Natural killer cell (primary cell): ENCODE measurements at regions of chr16 and their contacts with region 1.

Region 1: GRCh38 chr16:8567750-8568617 is 22.3 kb downstream of the TMEM114 start:
- DNase-seq: peak; percentile 65 to 89
- ATAC-seq: peak; percentile 92 to 95 (median 95)
- H3K4me3 ChIP-seq: no peak overlapping the region
- H3K4me3 Mint-ChIP-seq: no peak overlapping the region
- H3K27ac ChIP-seq: no peak overlapping the region
- H3K27ac Mint-ChIP-seq: no peak overlapping the region
- H3K4me1 ChIP-seq: peaks cover 6% of the 10 kb centered on the region
- H3K4me1 Mint-ChIP-seq: no peaks in the 10 kb centered on the region
- H3K27me3 ChIP-seq: no peaks in the 10 kb centered on the region
- H3K27me3 Mint-ChIP-seq: peaks cover 0 to 8% of the 10 kb centered on the region in 2 donors
- CTCF ChIP-seq: peak; percentile 96

Region 2: DNA sequence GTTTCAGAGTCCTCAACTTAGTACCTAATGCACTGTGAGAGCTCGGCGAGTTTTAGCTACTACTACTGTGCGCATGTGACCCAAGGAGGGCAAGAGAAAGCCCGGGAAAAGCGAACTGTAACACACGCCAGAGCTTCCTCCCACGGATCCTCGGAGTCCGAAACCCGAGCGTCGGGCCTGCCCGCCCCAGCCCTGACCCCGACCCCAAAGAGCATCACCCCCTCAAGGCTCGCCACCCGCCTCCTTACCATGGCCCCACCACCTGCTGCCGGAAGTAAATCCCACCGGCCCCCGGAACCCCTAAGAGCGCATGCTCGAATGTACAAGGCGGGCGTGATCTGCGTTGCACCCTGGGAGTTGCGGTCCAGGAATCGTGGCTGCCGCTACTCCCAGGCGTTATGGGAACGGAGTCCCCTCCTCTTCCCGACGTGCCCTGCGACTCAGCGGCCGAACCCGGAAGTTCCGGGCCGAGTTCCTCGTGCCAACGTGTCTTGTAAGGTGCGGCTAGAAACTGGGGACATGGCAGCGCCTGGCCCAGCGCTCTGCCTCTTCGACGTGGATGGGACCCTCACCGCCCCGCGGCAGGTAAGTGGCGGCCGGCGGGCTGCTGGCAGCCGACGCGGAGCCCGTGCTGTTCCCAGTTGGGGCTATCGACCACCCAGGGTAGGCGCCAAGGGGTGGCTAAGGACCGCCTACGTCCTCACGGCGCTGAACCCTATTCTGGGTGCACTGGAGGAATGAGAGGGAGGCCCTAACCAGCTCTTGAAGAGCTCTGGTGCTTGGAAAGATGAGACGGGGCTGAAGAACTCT is 229.6 kb after region 1 on chr16 and contains the starts of genes PMM2 and TMEM186:
- intact Hi-C with region 1: loop called (anchors 10 kb)
- DNase-seq: peak; percentile 89 to 98
- ATAC-seq: peak; percentile 95 to 98 (median 97)
- H3K4me3 ChIP-seq: peak within 1 kb of the TSS; percentile 77
- H3K4me3 Mint-ChIP-seq: peak within 1 kb of the TSS; percentile 88
- H3K27ac ChIP-seq: peak within 1 kb of the TSS; percentile 66
- H3K27ac Mint-ChIP-seq: peak within 1 kb of the TSS; percentile 88 to 96
- H3K4me1 ChIP-seq: peaks cover 20% of the 10 kb centered on the region
- H3K4me1 Mint-ChIP-seq: peaks cover 30 to 35% of the 10 kb centered on the region in 2 donors
- H3K27me3 ChIP-seq: no peaks in the 10 kb centered on the region
- H3K27me3 Mint-ChIP-seq: no peaks in the 10 kb centered on the region
- CTCF ChIP-seq: no peak
- total RNA-seq, gene PMM2: 33.4 to 37.6 (median 36.4) TPM
- total RNA-seq, gene TMEM186: 3.0 to 5.2 (median 4.1) TPM

Region 3: GRCh38 chr16:8880839-8881510 is 313.0 kb after region 1 on chr16:
- intact Hi-C with region 1: loop called (anchors 1 kb)
- DNase-seq: no peak
- ATAC-seq: no peak
- H3K4me3 ChIP-seq: no peak overlapping the region
- H3K4me3 Mint-ChIP-seq: no peak overlapping the region
- H3K27ac ChIP-seq: no peak overlapping the region
- H3K27ac Mint-ChIP-seq: no peak overlapping the region
- H3K4me1 ChIP-seq: peaks cover 16% of the 10 kb centered on the region
- H3K4me1 Mint-ChIP-seq: peaks cover 10 to 15% of the 10 kb centered on the region in 2 donors
- H3K27me3 ChIP-seq: no peaks in the 10 kb centered on the region
- H3K27me3 Mint-ChIP-seq: peaks cover 0 to 8% of the 10 kb centered on the region in 2 donors
- CTCF ChIP-seq: no peak

Region 4: GRCh38 chr16:9008601-9009260 is 440.7 kb after region 1 on chr16:
- intact Hi-C with region 1: loop called (anchors 1 kb)
- DNase-seq: peak; percentile 53 to 77
- ATAC-seq: peak; percentile 83 to 99 (median 98)
- H3K4me3 ChIP-seq: no peak overlapping the region
- H3K4me3 Mint-ChIP-seq: no peak overlapping the region
- H3K27ac ChIP-seq: no peak overlapping the region
- H3K27ac Mint-ChIP-seq: no peak overlapping the region
- H3K4me1 ChIP-seq: peaks cover 8% of the 10 kb centered on the region
- H3K4me1 Mint-ChIP-seq: peaks cover 0 to 7% of the 10 kb centered on the region in 2 donors
- H3K27me3 ChIP-seq: no peaks in the 10 kb centered on the region
- H3K27me3 Mint-ChIP-seq: peaks cover 0 to 12% of the 10 kb centered on the region in 2 donors
- CTCF ChIP-seq: peak; percentile 79

Region 5: GRCh38 chr16:9134739-9135138 is 566.8 kb after region 1 on chr16:
- intact Hi-C with region 1: loop called (anchors 10 kb)
- DNase-seq: peak; percentile 53 to 76
- ATAC-seq: peak; percentile 67 to 78 (median 74)
- H3K4me3 ChIP-seq: no peak overlapping the region
- H3K4me3 Mint-ChIP-seq: peak overlapping the region; percentile 65
- H3K27ac ChIP-seq: no peak overlapping the region
- H3K27ac Mint-ChIP-seq: peak overlapping the region in 1 of 2 donors; percentile 58
- H3K4me1 ChIP-seq: peaks cover 43% of the 10 kb centered on the region
- H3K4me1 Mint-ChIP-seq: peaks cover 30 to 51% of the 10 kb centered on the region in 2 donors
- H3K27me3 ChIP-seq: no peaks in the 10 kb centered on the region
- H3K27me3 Mint-ChIP-seq: peaks cover 0 to 2% of the 10 kb centered on the region in 2 donors
- CTCF ChIP-seq: peak; percentile 58

Region 6: DNA sequence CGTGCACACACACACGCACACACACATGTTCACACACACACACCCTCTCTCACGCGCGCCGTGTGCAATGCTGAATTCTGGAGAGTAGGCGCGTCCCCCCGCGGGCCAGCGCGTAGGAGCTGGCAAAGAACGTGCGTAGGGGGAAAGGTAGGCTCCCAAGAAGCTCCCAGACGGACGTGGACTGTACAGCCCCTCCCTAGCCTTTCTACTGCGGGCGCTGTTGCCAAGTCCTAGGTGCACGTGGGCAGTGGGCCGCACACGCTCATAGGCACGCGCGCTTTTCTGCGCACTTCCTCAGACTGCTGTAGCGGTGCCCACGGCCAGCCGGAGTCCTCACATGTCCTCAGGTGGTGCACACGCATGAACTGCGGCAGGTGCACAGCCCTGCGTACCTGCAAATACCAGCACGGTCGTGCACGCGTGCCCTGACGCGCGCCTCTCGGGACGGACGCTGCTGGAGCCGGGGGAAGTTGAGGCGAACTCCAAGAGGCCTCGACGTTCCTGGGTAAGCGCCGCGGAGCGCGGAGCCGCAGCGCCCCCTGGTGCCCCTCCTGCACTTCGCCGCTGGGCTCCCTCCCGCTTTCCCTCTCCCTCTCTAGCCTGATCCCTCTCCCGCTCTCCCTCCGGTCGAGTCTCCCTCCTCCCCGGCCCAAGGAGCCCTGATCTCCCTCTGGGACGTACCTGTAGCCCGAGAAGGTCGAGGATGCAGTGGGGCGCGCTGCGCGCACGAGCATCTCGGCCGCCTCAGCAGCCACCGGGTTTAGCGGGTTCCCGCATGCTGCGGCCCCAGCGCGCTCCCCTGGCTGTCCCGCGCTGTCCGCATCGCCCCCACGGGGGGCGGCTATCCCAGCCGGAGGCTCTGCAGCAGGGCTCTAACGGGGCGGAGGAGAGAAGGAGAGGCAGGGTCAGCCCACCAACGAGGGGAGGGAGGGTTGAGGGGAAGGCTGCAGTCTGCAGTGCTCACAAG is 1613.5 kb after region 1 on chr16:
- intact Hi-C with region 1: loop called (anchors 5 kb)
- DNase-seq: peak in 1 of 2 donors; percentile 38
- ATAC-seq: peak in 1 of 3 donors; percentile 62
- H3K4me3 ChIP-seq: no peak overlapping the region
- H3K4me3 Mint-ChIP-seq: no peak overlapping the region
- H3K27ac ChIP-seq: no peak overlapping the region
- H3K27ac Mint-ChIP-seq: no peak overlapping the region
- H3K4me1 ChIP-seq: peaks cover 14% of the 10 kb centered on the region
- H3K4me1 Mint-ChIP-seq: peaks cover 0 to 11% of the 10 kb centered on the region in 2 donors
- H3K27me3 ChIP-seq: peaks cover 12% of the 10 kb centered on the region
- H3K27me3 Mint-ChIP-seq: peaks cover 37 to 38% of the 10 kb centered on the region in 2 donors
- CTCF ChIP-seq: peak; percentile 46